ENCODE measurements at regions of chr3 and their contacts with region 1.

Region 1: DNA sequence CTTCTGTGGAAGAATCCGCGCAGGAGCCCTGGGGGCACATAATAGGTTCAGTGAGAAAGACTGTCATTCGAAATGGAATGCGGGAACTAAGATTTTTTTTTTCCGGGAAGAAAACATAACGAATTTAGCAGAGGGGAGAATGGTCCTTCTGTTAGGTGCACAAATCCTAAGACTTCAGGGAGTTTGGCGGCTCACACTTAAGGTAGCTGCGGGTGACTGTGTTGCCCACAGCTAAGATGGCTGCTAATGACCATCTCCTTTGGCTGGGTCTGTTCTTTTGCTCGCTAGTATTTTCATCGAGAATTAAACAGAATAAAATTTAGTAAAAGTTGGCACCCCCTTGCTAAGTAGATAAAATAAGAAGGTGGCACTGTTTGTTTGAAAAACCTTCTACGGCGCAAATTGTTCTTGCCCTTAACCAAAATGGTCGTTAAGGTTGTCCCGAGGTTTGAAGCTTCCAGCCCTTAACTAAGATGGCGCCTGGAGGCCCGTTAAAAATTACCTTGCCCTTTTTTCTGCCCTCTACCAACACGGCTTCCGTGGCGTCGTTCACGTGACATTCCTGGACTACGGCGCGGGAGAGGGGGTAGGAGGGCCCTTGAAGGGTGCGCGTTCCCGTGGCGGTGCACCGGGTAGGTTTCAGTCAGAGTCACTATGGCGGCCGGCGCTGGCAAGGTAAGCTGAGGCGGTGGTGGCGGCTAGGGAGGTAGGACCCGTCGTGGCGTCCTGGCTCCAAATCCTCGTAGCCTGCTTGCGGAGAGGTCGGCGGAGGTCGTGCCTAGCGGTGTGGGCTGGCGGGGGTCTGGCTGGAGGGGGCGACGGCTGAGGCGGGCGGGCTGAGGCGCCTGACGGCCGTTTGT is at the start of gene SLMAP:
- DNase-seq: peak; percentile 99
- H3K4me3 Mint-ChIP-seq: peak within 1 kb of the TSS; percentile 97
- H3K27ac Mint-ChIP-seq: peak within 1 kb of the TSS; percentile 98
- H3K4me1 Mint-ChIP-seq: peaks cover 27% of the 10 kb centered on the region
- H3K27me3 Mint-ChIP-seq: no peaks in the 10 kb centered on the region
- CTCF ChIP-seq: no peak
- total RNA-seq, gene SLMAP: 71.0 and 77.9 TPM in 2 replicates

Region 2: DNA sequence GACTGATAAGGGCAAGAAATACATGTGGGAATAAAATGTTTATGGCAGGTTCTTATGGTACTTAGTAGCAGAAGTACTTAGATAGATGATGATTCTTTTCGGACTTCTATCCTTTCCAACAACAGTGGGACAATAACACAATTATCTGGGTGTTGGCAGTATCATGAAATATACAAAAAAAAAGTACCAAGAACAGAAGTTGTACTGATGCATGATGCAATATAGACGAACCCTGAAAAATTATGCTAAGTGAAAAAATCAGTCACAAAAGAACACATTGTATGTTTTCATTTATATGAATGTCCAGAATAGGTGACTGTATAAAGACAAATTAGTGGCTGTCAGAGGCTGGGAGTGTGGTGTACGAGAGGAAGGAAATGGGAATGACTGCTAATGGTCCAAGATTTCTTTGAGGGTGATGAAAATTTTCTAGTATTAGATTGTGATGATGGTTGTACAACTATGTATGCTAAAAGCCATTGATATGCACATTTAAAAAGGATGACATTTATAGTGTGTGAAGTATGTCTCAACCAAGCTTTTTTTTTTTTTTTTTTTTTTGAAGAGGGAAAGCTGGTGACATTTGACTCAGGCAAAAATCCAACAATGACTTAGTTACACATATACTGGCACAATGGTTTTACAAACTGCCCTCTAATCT is 179.8 kb before region 1 on chr3:
- CTCF ChIA-PET with region 1: no interaction called
- POLR2A ChIA-PET with region 1: no interaction called
- intact Hi-C with region 1: no loop called
- DNase-seq: no peak
- H3K4me3 Mint-ChIP-seq: no peak overlapping the region
- H3K27ac Mint-ChIP-seq: peak overlapping the region; percentile 37
- H3K4me1 Mint-ChIP-seq: peaks cover 6% of the 10 kb centered on the region
- H3K27me3 Mint-ChIP-seq: no peaks in the 10 kb centered on the region
- CTCF ChIP-seq: no peak

Region 3: DNA sequence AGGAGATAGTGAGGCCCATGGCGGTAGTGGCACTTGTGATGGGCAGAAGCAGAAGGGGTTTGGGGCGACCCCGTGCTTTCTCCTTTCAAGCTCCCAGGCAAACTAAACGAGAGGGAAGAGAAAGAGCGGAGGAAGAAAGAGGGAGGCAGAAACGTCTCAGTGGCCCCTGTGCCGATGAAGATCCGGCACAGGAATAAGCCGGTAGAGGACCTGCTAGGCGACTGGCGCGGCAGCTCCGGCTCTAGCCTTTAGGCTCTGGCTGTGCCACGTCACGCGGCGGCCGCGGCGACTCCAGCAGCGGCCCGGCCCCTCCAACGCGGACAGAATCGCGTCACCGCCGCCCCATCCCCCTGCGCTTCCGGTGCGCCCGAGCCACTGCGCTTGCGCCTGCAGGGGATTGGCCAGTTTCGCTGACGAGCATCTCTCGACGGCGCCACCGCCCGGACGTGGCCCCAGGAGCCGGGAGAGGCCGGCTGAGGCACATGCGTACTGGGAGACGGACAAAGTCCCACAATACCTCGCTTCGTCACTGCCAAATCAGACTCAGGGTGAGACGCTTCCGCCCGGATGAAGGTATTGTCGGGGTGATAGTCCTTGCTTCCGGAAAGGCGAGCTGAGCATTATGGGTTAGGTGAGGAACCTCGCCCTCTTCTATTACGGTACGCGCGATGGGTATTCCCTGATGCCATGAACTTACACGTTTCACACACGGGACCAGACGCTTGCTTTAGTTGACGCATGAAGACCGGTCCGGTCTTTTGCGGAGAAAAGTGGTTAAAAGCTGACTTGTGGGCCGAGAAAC is 158.6 kb before region 1 on chr3 and contains the start of gene ARF4:
- CTCF ChIA-PET with region 1: no interaction called
- POLR2A ChIA-PET with region 1: interaction called, 41 read pairs
- intact Hi-C with region 1: loop called (anchors 2 kb)
- DNase-seq: peak; percentile 100
- H3K4me3 Mint-ChIP-seq: peak within 1 kb of the TSS; percentile 86
- H3K27ac Mint-ChIP-seq: peak within 1 kb of the TSS; percentile 100
- H3K4me1 Mint-ChIP-seq: peaks cover 31% of the 10 kb centered on the region
- H3K27me3 Mint-ChIP-seq: no peaks in the 10 kb centered on the region
- CTCF ChIP-seq: no peak
- total RNA-seq, gene ARF4: 275 and 396 TPM in 2 replicates

Region 4: DNA sequence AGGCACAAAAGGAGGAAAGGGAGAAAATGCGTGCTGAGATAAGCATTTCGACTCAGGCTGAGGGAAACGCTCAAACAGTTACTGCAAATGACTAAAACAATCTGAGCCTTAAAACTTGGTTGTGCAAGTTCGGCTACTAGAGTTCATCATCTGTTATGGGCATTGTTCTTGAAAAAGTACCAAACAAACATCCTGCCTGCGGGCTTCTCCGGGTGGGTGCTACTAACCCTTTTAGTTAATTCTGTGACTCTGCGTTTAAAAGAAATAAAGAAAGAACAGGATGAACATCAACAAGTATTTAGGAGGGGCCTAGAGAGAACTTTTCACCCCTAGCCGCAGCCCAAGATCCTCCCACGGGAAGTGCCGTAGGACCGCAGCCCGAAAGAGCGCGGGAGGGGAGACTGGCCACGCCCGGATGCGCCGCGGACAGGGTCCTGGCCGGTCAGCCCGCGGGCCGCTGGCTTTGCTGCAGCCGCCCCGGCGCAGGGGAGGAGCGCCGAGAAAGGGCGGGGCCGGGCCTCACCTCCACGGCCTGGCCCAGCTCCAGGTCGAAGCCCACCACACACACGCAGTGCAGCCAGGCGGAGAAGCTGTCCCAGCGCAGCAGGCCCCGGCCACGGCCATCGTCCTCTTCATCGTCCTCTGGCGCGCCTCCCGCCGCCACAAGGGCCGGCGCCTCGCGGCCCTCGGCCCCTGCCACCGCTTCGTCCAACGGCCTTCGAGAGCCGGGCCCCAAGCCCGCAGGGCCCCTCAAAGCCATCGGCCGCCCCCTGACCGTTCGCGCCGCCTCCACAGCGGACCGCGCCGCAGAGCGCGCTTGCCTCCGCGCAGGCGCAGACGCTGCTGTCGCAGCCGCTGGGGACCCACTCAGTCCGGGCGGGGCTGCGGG is 63.4 kb before region 1 on chr3 and contains the start of gene DENND6A:
- CTCF ChIA-PET with region 1: interaction called, 7 read pairs
- POLR2A ChIA-PET with region 1: interaction called, 71 read pairs
- intact Hi-C with region 1: loop called (anchors 1 kb)
- DNase-seq: peak; percentile 91
- H3K4me3 Mint-ChIP-seq: peak within 1 kb of the TSS; percentile 80
- H3K27ac Mint-ChIP-seq: peak within 1 kb of the TSS; percentile 71
- H3K4me1 Mint-ChIP-seq: peaks cover 25% of the 10 kb centered on the region
- H3K27me3 Mint-ChIP-seq: no peaks in the 10 kb centered on the region
- CTCF ChIP-seq: no peak
- total RNA-seq, gene DENND6A: 21.2 and 22.3 TPM in 2 replicates

Region 5: GRCh38 chr3:57743496-57743895 is 12.4 kb before region 1 on chr3:
- CTCF ChIA-PET with region 1: no interaction called
- POLR2A ChIA-PET with region 1: interaction called, 10 read pairs
- intact Hi-C with region 1: no loop called
- DNase-seq: no peak
- H3K4me3 Mint-ChIP-seq: no peak overlapping the region
- H3K27ac Mint-ChIP-seq: no peak overlapping the region
- H3K4me1 Mint-ChIP-seq: peaks cover 5% of the 10 kb centered on the region
- H3K27me3 Mint-ChIP-seq: no peaks in the 10 kb centered on the region
- CTCF ChIP-seq: no peak

Region 6: DNA sequence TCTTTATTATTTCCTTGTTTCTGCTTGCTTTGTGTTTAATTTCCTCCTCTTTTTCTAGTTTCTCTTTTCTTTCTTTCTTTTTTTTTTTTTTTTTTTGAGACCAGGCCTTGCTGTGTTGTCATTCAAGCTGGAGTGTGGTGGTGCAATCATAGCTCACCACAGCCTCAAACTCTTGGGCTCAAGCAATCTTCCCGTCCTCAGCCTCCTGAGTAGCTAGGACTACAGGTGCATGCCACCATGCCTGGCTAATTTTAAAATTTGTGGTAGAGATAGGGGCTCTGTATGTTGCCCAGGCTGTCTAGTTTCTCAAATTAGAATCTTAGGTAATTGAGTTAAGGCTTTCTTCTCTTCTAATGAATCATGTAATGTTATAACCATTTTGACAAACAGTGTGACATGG is 22.6 kb after region 1 on chr3:
- CTCF ChIA-PET with region 1: interaction called, 4 read pairs
- POLR2A ChIA-PET with region 1: interaction called, 20 read pairs
- intact Hi-C with region 1: no loop called
- DNase-seq: no peak
- H3K4me3 Mint-ChIP-seq: no peak overlapping the region
- H3K27ac Mint-ChIP-seq: peak overlapping the region; percentile 86
- H3K4me1 Mint-ChIP-seq: peaks cover 19% of the 10 kb centered on the region
- H3K27me3 Mint-ChIP-seq: no peaks in the 10 kb centered on the region
- CTCF ChIP-seq: no peak

Region 7: DNA sequence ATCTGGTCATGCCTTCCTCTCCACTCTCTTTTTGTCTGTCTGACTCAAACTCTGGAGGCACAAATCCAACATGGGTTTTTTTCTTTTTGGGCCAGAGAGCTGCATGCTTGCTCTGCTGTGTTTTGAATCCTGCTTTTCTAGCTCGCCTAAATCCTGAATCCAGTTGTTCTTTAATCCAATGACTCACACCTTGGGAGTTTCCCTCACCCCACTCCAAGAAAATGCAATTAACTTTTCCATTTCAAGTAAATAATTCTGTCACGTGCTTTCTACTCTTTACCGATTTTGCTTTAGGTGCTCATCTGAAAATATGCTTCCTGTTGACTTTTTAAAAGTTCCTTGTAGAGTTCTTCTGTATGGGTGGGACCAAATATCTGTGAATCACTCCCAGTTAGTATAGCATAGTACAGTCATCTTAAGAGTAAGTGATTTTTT is 47.8 kb after region 1 on chr3:
- CTCF ChIA-PET with region 1: interaction called, 5 read pairs
- POLR2A ChIA-PET with region 1: interaction called, 47 read pairs
- intact Hi-C with region 1: loop called (anchors 2 kb)
- DNase-seq: peak; percentile 97
- H3K4me3 Mint-ChIP-seq: peak overlapping the region; percentile 67
- H3K27ac Mint-ChIP-seq: peak overlapping the region; percentile 85
- H3K4me1 Mint-ChIP-seq: peaks cover 60% of the 10 kb centered on the region
- H3K27me3 Mint-ChIP-seq: no peaks in the 10 kb centered on the region
- CTCF ChIP-seq: no peak

Region 8: DNA sequence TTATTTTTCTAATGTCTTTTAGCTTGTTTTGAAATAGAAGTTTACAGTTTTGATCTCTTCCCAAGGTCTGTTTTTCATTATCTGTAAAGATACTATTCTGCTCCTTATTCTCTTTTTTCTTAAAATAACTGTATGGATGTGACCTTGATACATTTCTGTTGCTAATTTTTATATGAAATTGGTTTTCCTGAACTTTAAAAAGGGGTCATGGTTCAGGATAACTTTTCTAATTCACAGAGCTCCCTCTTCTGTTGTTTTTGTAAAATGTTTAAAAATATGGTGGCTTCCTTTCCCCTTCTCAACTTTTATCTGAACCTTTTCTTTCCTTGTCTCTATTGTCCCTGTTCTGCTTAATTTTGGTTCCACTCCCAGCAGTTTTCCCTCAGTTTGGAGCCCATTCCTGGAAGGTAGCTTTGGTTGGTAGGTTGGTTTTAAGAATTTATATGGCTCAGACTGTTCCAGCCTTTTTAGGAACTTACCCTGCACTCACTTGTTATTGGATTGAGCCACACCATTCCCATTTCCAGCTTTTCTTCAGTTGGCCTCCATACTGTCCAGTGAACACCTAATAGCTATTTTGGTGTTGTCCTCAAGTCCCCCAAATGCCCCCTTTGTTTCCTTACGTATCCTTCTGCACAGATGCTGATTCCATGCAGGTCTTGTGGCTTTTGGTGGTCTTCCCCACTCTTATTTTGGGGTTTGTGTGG is 70.5 kb after region 1 on chr3:
- CTCF ChIA-PET with region 1: interaction called, 20 read pairs
- POLR2A ChIA-PET with region 1: interaction called, 52 read pairs
- intact Hi-C with region 1: loop called (anchors 1 kb)
- DNase-seq: no peak
- H3K4me3 Mint-ChIP-seq: no peak overlapping the region
- H3K27ac Mint-ChIP-seq: peak overlapping the region; percentile 40
- H3K4me1 Mint-ChIP-seq: peaks cover 18% of the 10 kb centered on the region
- H3K27me3 Mint-ChIP-seq: no peaks in the 10 kb centered on the region
- CTCF ChIP-seq: peak; percentile 49

Measured in MCF 10A (cell line).